Caco-2 (cell line): ENCODE measurements at regions of chr4 and their contacts with region 1.

Region 1: DNA sequence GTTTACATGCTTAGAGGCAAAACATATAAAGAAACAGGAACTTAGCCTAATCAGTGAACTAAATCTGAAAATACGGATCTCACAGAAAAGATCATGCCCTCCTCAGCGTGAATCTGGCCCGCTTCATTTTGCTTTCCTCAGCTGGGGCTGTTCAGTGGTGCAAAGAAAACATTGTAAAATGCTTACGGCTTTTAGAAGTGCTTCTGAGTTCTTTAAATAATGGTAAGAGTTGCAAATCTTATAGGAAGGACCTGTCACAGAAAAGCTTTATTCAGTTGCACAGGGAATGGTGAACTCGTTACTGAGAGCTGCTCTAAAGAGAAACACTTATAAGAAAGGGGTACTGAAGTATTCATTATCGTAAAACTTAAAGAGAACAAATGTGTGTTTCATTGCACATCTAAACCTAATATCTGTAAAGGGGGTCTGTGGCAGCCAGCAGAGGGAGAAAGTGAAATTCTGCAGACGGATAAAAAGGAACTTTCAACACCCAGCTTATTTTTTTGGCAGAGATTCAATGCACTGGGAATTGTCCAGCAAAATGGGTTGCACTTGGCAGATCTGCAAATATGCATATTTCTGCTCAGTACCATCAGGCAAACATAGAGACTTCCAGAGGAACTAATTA is 139.2 kb upstream of the ANK2 start:
- DNase-seq: no peak
- H3K4me3 ChIP-seq: no peak overlapping the region
- H3K4me3 Mint-ChIP-seq: no peak overlapping the region
- H3K27ac Mint-ChIP-seq: no peak overlapping the region
- H3K4me1 ChIP-seq: no peaks in the 10 kb centered on the region
- H3K4me1 Mint-ChIP-seq: peaks cover 10% of the 10 kb centered on the region
- H3K27me3 ChIP-seq: no peaks in the 10 kb centered on the region
- H3K27me3 Mint-ChIP-seq: no peaks in the 10 kb centered on the region
- CTCF ChIP-seq: no peak

Region 2: GRCh38 chr4:112840619-112841018 is 69.6 kb before region 1 on chr4:
- CTCF ChIA-PET with region 1: interaction called, 11 read pairs
- POLR2A ChIA-PET with region 1: no interaction called
- intact Hi-C with region 1: no loop called
- DNase-seq: no peak
- H3K4me3 ChIP-seq: no peak overlapping the region
- H3K4me3 Mint-ChIP-seq: no peak overlapping the region
- H3K27ac Mint-ChIP-seq: no peak overlapping the region
- H3K4me1 ChIP-seq: no peaks in the 10 kb centered on the region
- H3K4me1 Mint-ChIP-seq: no peaks in the 10 kb centered on the region
- H3K27me3 ChIP-seq: no peaks in the 10 kb centered on the region
- H3K27me3 Mint-ChIP-seq: no peaks in the 10 kb centered on the region
- CTCF ChIP-seq: no peak

Region 3: DNA sequence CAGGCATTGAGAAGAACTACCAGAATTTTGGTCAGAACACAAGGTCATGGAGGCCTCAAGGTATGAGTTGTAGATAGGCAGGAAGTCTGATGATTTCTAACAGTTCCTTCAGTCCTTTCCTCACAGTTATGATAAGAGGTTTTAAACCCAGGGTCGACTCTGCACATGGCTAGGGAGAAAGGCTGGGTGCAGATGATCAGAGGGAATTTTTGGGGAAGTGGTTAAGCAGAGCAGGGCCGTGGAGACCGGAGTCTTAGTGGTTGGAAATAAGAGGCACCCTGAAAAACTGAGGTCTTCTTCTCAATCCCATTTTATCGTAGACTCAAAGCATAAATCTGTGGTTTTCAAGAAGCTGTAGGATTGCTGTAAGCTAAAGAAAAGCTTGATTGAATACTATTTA is 20.8 kb after region 1 on chr4:
- CTCF ChIA-PET with region 1: no interaction called
- POLR2A ChIA-PET with region 1: no interaction called
- intact Hi-C with region 1: no loop called
- DNase-seq: no peak
- H3K4me3 ChIP-seq: no peak overlapping the region
- H3K4me3 Mint-ChIP-seq: no peak overlapping the region
- H3K27ac Mint-ChIP-seq: no peak overlapping the region
- H3K4me1 ChIP-seq: no peaks in the 10 kb centered on the region
- H3K4me1 Mint-ChIP-seq: no peaks in the 10 kb centered on the region
- H3K27me3 ChIP-seq: no peaks in the 10 kb centered on the region
- H3K27me3 Mint-ChIP-seq: no peaks in the 10 kb centered on the region
- CTCF ChIP-seq: no peak